ENCODE measurements at regions of chr18 and their contacts with region 1.

Region 1: DNA sequence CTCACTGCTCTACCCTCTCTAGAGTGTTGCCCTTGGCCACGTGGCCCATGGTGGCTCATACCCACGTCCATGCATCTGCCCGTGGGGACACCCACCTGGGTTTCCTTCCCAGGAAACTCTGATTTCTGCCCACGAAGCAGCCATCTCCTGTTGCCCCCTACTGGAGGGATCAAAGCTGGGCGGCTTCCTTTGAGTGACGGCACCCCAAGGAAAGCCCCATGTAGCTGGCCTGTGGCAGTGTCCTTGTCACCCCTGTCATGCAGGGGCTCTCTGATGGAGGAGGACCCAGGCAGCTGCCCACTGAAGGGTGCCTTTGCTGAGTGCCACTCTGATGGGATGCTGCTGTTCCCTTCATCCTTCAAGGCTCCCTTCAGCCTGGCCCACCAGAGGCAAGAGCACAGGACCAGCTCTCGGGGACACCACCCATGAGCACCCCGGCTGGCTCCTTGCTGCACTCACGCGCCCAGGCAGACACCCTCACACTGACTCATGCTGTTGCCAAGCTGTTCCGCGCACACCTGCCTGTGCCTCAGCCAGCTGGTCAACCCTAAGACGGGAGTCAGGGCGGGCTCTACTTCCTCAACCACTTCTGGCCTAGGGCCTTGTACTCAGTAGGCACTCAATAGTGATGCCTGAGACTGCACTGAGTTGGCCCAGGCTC is 101.1 kb downstream of the CTIF start:
- DNase-seq: peak; percentile 52
- ATAC-seq: peak; percentile 51
- H3K4me3 Mint-ChIP-seq: no peak overlapping the region
- H3K27ac Mint-ChIP-seq: no peak overlapping the region
- H3K4me1 Mint-ChIP-seq: peaks cover 9% of the 10 kb centered on the region
- H3K27me3 Mint-ChIP-seq: no peaks in the 10 kb centered on the region
- CTCF ChIP-seq: 0 out of 2 replicates have a peak, but pooled peaks have one; percentile 47

Region 2: DNA sequence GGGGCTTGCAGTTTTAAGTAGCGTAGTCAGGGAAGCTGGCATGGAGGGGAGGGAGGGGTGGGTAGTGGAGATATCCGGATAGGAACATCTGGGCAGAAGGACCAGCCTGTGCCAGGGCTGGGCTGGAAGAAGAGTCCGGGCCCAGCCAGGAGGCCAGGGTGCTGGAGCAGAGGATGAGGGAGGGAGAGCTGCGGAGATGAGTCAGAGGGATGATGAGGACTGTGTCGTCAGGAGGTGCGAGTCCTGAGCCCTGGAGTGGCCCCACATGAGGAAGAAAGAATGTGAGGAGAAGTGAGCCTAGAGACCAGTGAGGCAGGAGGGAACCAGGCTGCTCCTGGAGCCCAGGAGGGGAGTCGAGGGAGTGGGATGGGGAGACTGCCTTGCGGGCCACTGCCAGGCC is 18.7 kb before region 1 on chr18:
- CTCF ChIA-PET with region 1: interaction called, 12 read pairs
- POLR2A ChIA-PET with region 1: no interaction called
- DNase-seq: no peak
- ATAC-seq: no peak
- H3K4me3 Mint-ChIP-seq: no peak overlapping the region
- H3K27ac Mint-ChIP-seq: 0 out of 2 replicates have a peak overlapping the region, but pooled peaks have one; percentile 72
- H3K4me1 Mint-ChIP-seq: peaks cover 47% of the 10 kb centered on the region
- H3K27me3 Mint-ChIP-seq: no peaks in the 10 kb centered on the region
- CTCF ChIP-seq: no peak